Transverse colon (tissue), 4 donors: ENCODE measurements at regions of chr12 and their contacts with region 1.

Region 1: GRCh38 chr12:91432089-91432488 is 249.5 kb upstream of the DCN start:
- DNase-seq: no peak
- H3K4me3 ChIP-seq: no peak overlapping the region
- H3K27ac ChIP-seq: no peak overlapping the region
- H3K4me1 ChIP-seq: no peaks in the 10 kb centered on the region
- H3K27me3 ChIP-seq: no peaks in the 10 kb centered on the region
- CTCF ChIP-seq: no peak
- EP300 ChIP-seq: no peak
- POLR2A ChIP-seq: no peak

Region 2: DNA sequence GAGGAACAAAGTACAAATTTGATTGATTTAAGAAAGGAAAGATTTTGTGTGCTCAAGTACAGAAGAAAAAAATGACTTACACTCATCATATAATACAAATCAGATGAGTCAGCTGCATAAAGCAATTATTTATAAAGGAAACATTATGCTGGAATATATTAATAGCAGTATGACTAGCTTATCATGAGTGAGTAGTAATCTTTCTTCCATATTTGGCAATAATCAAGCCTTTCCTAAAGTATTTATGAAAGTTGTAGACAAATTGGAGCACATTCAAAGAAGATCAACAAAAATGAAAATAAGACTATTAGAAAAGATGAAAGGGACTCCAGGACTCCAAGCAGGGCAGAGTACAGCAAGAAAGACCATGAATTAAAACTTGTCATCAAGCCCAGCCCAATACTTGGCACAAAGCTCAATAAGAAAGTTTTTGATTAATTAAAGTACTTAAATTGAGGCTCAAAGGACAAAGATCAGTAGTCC is 509.9 kb before region 1 on chr12:
- in situ Hi-C with region 1: no loop called
- intact Hi-C with region 1: no loop called
- DNase-seq: no peak
- H3K4me3 ChIP-seq: no peak overlapping the region
- H3K27ac ChIP-seq: no peak overlapping the region
- H3K4me1 ChIP-seq: peaks cover 0 to 9% (median 0%) of the 10 kb centered on the region in 4 donors
- H3K27me3 ChIP-seq: no peaks in the 10 kb centered on the region
- CTCF ChIP-seq: no peak
- EP300 ChIP-seq: no peak
- POLR2A ChIP-seq: no peak

Region 3: GRCh38 chr12:91215940-91216454 is 216.1 kb before region 1 on chr12:
- in situ Hi-C with region 1: no loop called
- intact Hi-C with region 1: no loop called
- DNase-seq: no peak
- H3K4me3 ChIP-seq: no peak overlapping the region
- H3K27ac ChIP-seq: no peak overlapping the region
- H3K4me1 ChIP-seq: no peaks in the 10 kb centered on the region
- H3K27me3 ChIP-seq: no peaks in the 10 kb centered on the region
- CTCF ChIP-seq: no peak
- EP300 ChIP-seq: no peak
- POLR2A ChIP-seq: no peak

Region 4: DNA sequence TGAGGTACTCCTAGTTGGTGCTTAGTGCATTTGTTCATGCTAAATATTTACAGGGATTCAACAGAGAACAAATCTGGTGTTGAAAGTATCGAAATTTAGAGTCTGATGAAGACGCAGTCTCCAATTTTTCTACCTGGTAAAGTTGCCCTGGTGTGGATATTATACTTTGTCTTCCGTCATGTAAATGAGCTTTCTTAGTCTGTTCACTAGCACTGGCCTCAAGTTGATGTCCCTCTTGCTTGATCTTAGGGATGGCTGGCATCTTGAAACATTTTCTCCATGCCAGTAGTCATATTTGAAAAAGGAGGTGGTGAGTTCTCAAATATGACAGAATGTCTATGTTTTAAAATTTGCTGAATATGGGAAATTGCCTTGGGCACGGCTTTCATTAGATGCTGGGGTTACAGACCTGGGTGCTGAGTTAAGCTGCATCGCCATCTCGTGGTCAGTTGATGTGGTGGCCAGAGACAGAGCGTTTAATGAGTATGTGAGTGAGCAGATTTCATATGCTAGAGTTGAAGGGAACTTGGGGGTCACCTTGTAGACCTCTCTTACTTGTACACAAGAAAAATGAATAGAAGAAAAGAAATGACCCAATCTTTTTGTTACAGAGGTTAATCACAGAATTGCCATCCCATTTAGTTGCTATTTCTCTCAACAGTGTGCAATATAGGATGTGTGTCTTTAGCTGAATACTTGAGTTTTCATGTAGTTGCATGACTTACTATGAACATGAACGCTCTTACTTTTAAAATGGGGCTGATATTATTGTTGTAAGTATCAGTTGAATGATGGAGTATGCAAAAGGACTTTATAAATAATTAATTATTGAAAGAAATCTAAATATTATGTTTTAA is 76.7 kb before region 1 on chr12:
- in situ Hi-C with region 1: no loop called
- intact Hi-C with region 1: loop called (anchors 2 kb)
- DNase-seq: peak; percentile 73
- H3K4me3 ChIP-seq: no peak overlapping the region
- H3K27ac ChIP-seq: no peak overlapping the region
- H3K4me1 ChIP-seq: peaks cover 0 to 18% (median 3%) of the 10 kb centered on the region in 4 donors
- H3K27me3 ChIP-seq: no peaks in the 10 kb centered on the region
- CTCF ChIP-seq: peak; percentile 79 to 87 (median 79)
- EP300 ChIP-seq: no peak
- POLR2A ChIP-seq: no peak

Region 5: GRCh38 chr12:91633734-91634352 is 201.8 kb after region 1 on chr12:
- in situ Hi-C with region 1: no loop called
- intact Hi-C with region 1: no loop called
- DNase-seq: no peak
- H3K4me3 ChIP-seq: no peak overlapping the region
- H3K27ac ChIP-seq: no peak overlapping the region
- H3K4me1 ChIP-seq: peaks cover 0 to 9% (median 0%) of the 10 kb centered on the region in 4 donors
- H3K27me3 ChIP-seq: no peaks in the 10 kb centered on the region
- CTCF ChIP-seq: no peak
- EP300 ChIP-seq: no peak
- POLR2A ChIP-seq: no peak